Body of pancreas (tissue), 4 donors: ENCODE measurements at regions of chr19 and their contacts with region 1.

Region 1: DNA sequence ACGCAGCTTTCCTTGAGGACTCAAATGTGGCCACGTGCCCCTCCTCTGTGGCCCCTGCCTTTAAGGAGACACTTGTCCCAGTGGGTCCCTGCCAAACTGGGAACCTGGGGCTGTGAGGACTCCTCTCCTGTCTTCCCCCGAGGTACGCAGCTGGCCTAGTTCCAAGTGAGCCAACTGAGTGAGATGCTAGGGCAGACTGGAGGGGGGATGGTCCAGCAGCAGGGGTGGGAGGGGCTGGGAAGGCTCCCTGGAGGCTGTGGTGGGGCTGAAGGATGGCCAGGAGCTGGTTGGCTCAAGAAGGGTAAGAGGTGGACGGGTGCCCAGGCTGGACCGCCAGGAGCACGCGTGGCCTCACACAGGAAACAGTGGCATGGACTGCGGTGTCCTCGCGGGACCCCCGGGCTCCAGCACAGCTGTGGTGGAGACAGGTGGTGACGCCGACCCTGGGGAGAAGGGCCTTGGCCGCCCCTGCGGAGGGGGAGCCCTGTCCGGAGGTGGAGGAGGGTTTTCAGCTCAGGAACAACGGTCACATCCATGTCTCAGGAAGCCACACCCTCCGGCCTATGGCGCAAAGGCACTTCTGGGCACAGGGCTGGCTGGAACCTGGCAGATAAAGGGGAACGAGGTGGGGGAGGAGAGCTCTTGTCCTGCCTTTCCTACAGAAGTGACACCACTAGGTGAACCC is 45.8 kb downstream of the MLLT1 start:
- DNase-seq: peak in 3 of 4 donors; percentile 47 to 48 (median 47)
- ATAC-seq: no peak
- H3K4me3 ChIP-seq: no peak overlapping the region
- H3K27ac ChIP-seq: peak overlapping the region; percentile 58 to 74 (median 62)
- H3K4me1 ChIP-seq: peaks cover 58% of the 10 kb centered on the region
- H3K27me3 ChIP-seq: no peaks in the 10 kb centered on the region
- CTCF ChIP-seq: no peak
- POLR2A ChIP-seq: no peak

Region 2: DNA sequence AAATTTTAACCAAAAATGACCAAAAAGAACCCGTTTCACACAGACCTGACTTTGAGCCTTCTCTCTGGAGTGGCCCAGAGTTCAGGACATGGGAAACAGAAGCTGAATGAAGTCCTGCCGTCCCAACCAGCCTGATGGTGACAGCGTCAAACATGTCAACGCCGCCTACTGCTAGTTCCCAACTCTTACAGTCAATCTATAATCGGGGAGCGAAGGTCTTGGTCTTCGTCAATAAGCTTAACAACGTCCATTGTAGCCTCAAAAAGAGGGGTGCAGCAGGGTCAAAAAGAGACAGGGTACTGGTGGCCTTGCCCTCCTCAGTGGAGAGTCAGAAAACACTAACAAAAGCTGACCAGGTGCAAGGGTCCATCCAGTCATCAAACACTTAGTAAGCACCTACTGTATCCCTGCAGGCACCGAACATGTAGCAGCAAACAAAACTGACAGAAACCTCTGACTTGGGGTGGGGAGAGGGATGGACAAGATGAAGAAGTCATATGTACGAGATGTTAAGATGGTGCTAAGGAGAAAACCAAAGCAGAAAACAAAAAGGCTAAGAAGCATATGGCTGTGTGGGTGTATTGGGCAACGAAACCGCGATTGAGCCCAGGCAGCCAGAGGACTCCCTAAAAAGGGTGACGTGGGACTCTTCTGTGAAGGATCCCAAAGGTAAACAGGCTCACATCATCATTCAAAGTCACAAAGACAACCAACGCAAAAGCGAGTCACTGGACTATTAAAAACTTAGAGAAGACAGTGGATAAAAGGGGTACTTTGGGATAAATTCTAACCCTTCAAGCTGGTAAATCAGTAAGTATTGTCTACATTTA is 33.8 kb after region 1 on chr19:
- intact Hi-C with region 1: loop called (anchors 5 kb)
- DNase-seq: no peak
- ATAC-seq: no peak
- H3K4me3 ChIP-seq: no peak overlapping the region
- H3K27ac ChIP-seq: no peak overlapping the region
- H3K4me1 ChIP-seq: peaks cover 30% of the 10 kb centered on the region
- H3K27me3 ChIP-seq: no peaks in the 10 kb centered on the region
- CTCF ChIP-seq: no peak
- POLR2A ChIP-seq: no peak